Activated CD4-positive, alpha-beta T cell treated with anti-CD3 and anti-CD28 coated beads, Interleukin-2, amount 10 ng/mL, durations not matched to agents 24 days and 14 days (primary cell): ENCODE measurements at regions of chr2 and their contacts with region 1.

Region 1: DNA sequence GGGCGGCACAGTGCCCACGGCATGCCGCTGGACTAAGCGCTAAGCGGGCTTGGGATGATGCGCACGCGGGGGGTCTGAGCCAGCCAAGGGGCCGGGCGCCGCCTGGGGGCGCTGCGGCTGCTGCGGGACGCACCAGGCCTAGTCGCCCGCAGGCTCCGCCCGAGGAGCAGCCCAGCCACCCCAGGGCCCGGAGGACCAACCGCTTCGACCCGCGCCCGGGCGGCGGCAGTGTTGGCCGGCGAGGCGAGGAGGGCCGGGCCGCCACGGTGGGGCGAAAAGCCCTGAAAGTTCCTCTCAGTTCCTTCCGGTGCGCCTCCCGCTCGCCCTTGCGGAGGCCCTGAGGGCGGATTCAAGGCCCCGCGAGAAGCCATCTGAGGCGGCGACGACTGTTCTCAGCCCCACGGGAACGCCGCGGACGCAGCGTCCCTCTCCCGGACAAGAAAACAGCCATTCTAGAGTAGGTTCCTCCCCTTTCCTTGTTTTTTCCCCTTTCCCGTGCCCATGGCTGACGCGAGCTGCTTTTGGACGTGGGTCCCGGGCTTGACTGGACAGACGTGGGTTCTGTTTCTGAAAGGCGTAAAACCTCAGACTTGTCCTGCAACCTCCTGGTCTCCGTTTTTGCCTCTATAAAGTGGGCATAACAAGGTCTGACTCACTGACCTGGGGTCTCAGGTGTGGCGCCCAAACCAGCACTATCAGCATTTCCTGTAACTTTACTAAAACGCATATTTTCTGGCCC is at the start of gene ANKAR:
- DNase-seq: peak; percentile 94
- H3K4me3 Mint-ChIP-seq: peak within 1 kb of the TSS; percentile 86
- H3K27ac Mint-ChIP-seq: peak within 1 kb of the TSS; percentile 94
- H3K4me1 Mint-ChIP-seq: peaks cover 25% of the 10 kb centered on the region
- H3K27me3 Mint-ChIP-seq: no peaks in the 10 kb centered on the region
- total RNA-seq, gene ANKAR: 2.9 and 3.4 TPM in 2 replicates

Region 2: DNA sequence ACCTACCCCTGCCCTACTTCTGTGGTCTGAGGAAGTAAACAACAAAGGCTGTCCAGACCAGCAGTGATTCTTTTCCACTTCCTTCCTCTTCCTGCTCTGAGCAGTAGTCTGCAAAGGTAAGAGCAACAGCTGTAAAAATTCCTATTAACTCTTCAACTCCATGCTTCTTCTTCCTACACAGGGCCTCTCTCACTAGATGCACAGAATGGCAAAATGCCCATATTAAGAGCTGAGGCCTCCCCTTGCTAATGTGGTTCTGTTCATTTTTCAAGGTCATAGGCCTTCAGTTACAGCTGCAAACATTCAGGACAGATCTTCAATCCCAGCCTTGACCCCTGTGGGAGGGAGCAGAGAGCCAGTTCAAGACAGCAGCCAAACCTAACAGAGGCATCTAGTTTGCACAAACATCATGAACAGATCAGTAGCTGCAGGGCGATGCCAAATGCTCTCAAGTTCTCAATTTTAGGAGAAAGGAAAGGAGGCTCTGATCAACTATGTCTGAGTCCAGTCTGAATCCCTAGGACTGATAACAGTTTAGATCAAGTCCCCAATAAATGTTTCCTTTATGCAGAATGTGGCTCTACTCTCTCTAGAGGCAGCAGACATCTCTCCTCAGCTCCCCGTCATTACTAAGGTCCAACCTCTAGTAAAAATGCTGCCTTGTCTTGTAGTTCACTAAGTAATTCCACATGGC is 114.8 kb before region 1 on chr2:
- intact Hi-C with region 1: no loop called
- DNase-seq: no peak
- H3K4me3 Mint-ChIP-seq: no peak overlapping the region
- H3K27ac Mint-ChIP-seq: no peak overlapping the region
- H3K4me1 Mint-ChIP-seq: peaks cover 5% of the 10 kb centered on the region
- H3K27me3 Mint-ChIP-seq: no peaks in the 10 kb centered on the region

Region 3: DNA sequence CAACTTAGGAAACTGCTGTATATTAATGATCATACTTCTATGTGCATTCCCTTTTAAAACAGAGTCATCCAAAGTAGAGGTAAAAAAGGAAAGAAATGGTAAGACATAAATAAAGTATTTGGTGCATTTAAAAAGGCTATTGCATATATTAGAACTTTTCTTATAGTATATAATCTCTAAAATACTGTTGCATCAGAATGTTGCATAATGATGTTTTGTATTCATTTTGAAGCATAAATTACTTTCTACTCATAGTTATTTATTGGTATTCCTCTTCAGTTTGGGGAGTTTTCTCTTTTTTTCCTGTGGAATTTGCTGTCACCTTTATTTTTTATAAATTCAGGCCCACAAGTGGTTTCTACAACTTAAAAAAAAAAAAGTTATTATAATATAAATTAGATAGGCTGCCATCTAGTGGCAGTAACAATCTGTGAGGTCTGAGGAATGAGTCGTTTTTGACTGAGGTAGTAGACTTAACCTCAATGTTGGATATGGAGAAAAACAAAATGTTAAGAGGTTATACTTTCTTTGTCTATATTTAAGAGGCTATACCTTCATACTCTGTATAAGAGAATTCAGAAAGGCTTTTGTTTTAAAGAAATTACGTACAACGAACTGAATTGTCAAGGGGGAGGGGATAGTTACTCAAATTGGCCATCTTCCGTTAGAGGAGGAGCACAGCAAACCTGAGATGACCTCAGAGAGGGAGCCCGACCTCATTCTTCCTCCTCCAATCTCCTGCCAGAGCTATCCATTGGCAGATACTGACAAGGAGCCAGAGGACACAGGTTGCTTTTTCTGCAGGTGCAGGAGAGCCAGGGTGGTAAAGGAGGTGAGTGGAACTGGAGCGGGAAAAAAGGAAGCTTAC is 23.7 kb after region 1 on chr2:
- intact Hi-C with region 1: loop called (anchors 2 kb)
- DNase-seq: peak; percentile 81
- H3K4me3 Mint-ChIP-seq: no peak overlapping the region
- H3K27ac Mint-ChIP-seq: no peak overlapping the region
- H3K4me1 Mint-ChIP-seq: no peaks in the 10 kb centered on the region
- H3K27me3 Mint-ChIP-seq: no peaks in the 10 kb centered on the region